Activated CD4-positive, alpha-beta memory T cell treated with anti-CD3 and anti-CD28 coated beads, Interleukin-2, amount 10 ng/mL, durations not matched to agents 7 days and 5 days (primary cell): ENCODE measurements at regions of chr1 and their contacts with region 1.

Region 1: DNA sequence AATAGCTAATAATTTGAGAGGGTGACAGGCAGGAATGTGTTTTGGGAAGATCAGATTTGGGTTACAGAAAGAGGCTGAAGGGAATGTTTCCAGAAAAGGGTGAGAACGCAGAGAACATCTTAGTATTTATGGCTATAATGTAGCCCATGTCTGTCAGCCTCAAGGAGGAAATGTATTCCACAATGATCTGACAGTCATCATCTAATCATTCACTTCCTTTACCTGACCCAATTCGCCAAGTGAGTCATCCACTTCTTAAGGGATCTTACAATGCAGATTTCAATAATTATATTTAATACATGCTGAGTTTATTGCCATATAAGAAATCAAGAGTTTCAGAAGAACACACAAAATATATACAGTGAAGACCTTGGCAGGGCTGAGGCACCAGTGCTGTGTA is 10.8 kb downstream of the TRIM45 start:
- DNase-seq: no peak
- H3K4me3 Mint-ChIP-seq: no peak overlapping the region
- H3K27ac Mint-ChIP-seq: no peak overlapping the region
- H3K4me1 Mint-ChIP-seq: peaks cover 19% of the 10 kb centered on the region
- H3K27me3 Mint-ChIP-seq: no peaks in the 10 kb centered on the region

Region 2: GRCh38 chr1:116987256-116987555 is 123.6 kb before region 1 on chr1:
- CTCF ChIA-PET with region 1: no interaction called
- POLR2A ChIA-PET with region 1: no interaction called
- DNase-seq: peak; percentile 71
- H3K4me3 Mint-ChIP-seq: peak overlapping the region; percentile 63
- H3K27ac Mint-ChIP-seq: peak overlapping the region; percentile 51
- H3K4me1 Mint-ChIP-seq: peaks cover 29% of the 10 kb centered on the region
- H3K27me3 Mint-ChIP-seq: peaks cover 2% of the 10 kb centered on the region

Region 3: GRCh38 chr1:117120774-117121525 is 10.2 kb after region 1 on chr1:
- CTCF ChIA-PET with region 1: interaction called, 4 read pairs
- POLR2A ChIA-PET with region 1: interaction called, 11 read pairs
- DNase-seq: no peak
- H3K4me3 Mint-ChIP-seq: peak overlapping the region; percentile 75
- H3K27ac Mint-ChIP-seq: no peak overlapping the region
- H3K4me1 Mint-ChIP-seq: peaks cover 3% of the 10 kb centered on the region
- H3K27me3 Mint-ChIP-seq: peaks cover 11% of the 10 kb centered on the region

Region 4: GRCh38 chr1:117128323-117129079 is 17.7 kb after region 1 on chr1:
- CTCF ChIA-PET with region 1: interaction called, 11 read pairs
- POLR2A ChIA-PET with region 1: no interaction called
- DNase-seq: no peak
- H3K4me3 Mint-ChIP-seq: no peak overlapping the region
- H3K27ac Mint-ChIP-seq: no peak overlapping the region
- H3K4me1 Mint-ChIP-seq: no peaks in the 10 kb centered on the region
- H3K27me3 Mint-ChIP-seq: peaks cover 17% of the 10 kb centered on the region

Region 5: DNA sequence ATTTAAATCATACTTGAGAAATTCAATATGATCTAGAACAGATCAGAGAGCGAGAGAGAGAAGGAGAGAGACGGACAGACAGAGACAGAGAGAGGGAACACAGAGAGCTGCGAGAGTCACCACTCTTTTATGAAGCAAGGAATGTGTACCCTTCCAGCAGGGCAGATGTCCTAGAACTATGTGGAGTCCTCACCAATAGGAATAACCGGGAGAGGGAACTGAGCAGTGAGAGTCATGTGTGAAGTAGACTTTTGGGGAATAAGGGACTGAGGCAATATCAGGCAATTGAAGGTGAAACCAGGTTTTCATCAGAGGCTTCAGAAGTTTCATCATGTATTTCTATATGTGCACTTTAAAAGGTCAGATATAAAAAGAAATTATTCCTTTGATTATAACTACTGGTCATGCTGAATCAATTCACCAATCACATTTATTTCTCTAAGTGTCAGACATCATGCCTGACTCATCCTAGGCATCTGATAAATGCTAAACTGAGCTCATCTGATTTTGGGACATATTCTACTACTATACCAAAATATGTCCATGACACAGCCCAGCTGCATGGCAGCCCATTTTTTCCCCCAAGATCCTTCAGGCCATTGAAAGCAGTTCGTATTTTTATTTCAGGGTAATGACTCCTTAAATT is 77.5 kb after region 1 on chr1:
- CTCF ChIA-PET with region 1: no interaction called
- POLR2A ChIA-PET with region 1: no interaction called
- DNase-seq: no peak
- H3K4me3 Mint-ChIP-seq: no peak overlapping the region
- H3K27ac Mint-ChIP-seq: no peak overlapping the region
- H3K4me1 Mint-ChIP-seq: no peaks in the 10 kb centered on the region
- H3K27me3 Mint-ChIP-seq: peaks cover 8% of the 10 kb centered on the region